Naive thymus-derived CD4-positive, alpha-beta T cell (primary cell): ENCODE measurements at regions of chr1 and their contacts with region 1.

Region 1: GRCh38 chr1:226687426-226687825 is 51.7 kb downstream of the ITPKB start:
- DNase-seq: peak in 7 of 9 donors; percentile 22 to 69 (median 55)
- ATAC-seq: peak; percentile 55
- H3K4me3 ChIP-seq: no peak overlapping the region
- H3K4me3 Mint-ChIP-seq: peak overlapping the region; percentile 4 to 89 (median 66)
- H3K27ac ChIP-seq: peak overlapping the region; percentile 86
- H3K27ac Mint-ChIP-seq: peak overlapping the region; percentile 20 to 100 (median 99)
- H3K4me1 ChIP-seq: peaks cover 80 to 100% of the 10 kb centered on the region in 2 donors
- H3K4me1 Mint-ChIP-seq: peaks cover 86 to 100% (median 100%) of the 10 kb centered on the region in 7 donors
- H3K27me3 ChIP-seq: no peaks in the 10 kb centered on the region
- H3K27me3 Mint-ChIP-seq: no peaks in the 10 kb centered on the region

Region 2: GRCh38 chr1:226634166-226634588 is 53.2 kb before region 1 on chr1:
- CTCF ChIA-PET with region 1: interaction called, 33 read pairs
- POLR2A ChIA-PET with region 1: interaction called, 7 read pairs
- intact Hi-C with region 1: loop called (anchors 1 kb)
- DNase-seq: peak; percentile 69 to 86 (median 79)
- ATAC-seq: peak; percentile 89
- H3K4me3 ChIP-seq: no peak overlapping the region
- H3K4me3 Mint-ChIP-seq: peak overlapping the region; percentile 10 to 90 (median 64)
- H3K27ac ChIP-seq: peak overlapping the region; percentile 54
- H3K27ac Mint-ChIP-seq: peak overlapping the region; percentile 76 to 98 (median 90)
- H3K4me1 ChIP-seq: peaks cover 26 to 48% of the 10 kb centered on the region in 2 donors
- H3K4me1 Mint-ChIP-seq: peaks cover 23 to 75% (median 61%) of the 10 kb centered on the region in 7 donors
- H3K27me3 ChIP-seq: no peaks in the 10 kb centered on the region
- H3K27me3 Mint-ChIP-seq: no peaks in the 10 kb centered on the region

Region 3: DNA sequence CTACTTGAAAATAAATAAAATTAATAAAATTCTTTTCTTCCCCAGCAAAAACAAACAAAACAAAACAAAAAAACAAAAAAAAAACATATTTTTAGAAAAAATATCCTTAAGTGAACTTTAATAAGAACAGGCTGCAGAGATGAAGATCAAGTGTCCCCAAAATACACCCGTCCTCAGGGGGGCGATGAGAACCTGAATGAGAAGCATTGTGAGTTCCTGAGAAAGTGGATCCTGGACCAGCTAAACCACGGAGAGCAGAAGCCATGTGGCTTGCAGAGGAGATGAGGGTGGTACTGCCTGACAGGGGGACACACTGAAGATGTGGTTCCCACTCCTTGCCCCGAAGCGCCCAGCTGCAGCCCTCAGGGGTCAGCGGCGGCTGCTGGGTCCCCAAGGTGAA is 37.6 kb before region 1 on chr1:
- CTCF ChIA-PET with region 1: interaction called, 7 read pairs
- POLR2A ChIA-PET with region 1: interaction called, 276 read pairs
- intact Hi-C with region 1: loop called in 1 of 2 experiments (anchors 1 kb)
- DNase-seq: peak in 6 of 9 donors; percentile 48 to 58 (median 54)
- ATAC-seq: no peak
- H3K4me3 ChIP-seq: no peak overlapping the region
- H3K4me3 Mint-ChIP-seq: peak overlapping the region in 5 of 10 donors; percentile 15 to 50 (median 17)
- H3K27ac ChIP-seq: no peak overlapping the region
- H3K27ac Mint-ChIP-seq: no peak overlapping the region
- H3K4me1 ChIP-seq: peaks cover 23 to 51% of the 10 kb centered on the region in 2 donors
- H3K4me1 Mint-ChIP-seq: peaks cover 0 to 83% (median 63%) of the 10 kb centered on the region in 7 donors
- H3K27me3 ChIP-seq: no peaks in the 10 kb centered on the region
- H3K27me3 Mint-ChIP-seq: no peaks in the 10 kb centered on the region

Region 4: GRCh38 chr1:226702957-226703831 is 15.8 kb after region 1 on chr1:
- CTCF ChIA-PET with region 1: interaction called, 6 read pairs
- POLR2A ChIA-PET with region 1: interaction called, 19 read pairs
- intact Hi-C with region 1: loop called (anchors 1 kb)
- DNase-seq: peak; percentile 79 to 93 (median 86)
- ATAC-seq: peak; percentile 92
- H3K4me3 ChIP-seq: peak overlapping the region; percentile 69
- H3K4me3 Mint-ChIP-seq: peak overlapping the region; percentile 81 to 92 (median 86)
- H3K27ac ChIP-seq: peak overlapping the region; percentile 93
- H3K27ac Mint-ChIP-seq: peak overlapping the region; percentile 89 to 99 (median 95)
- H3K4me1 ChIP-seq: peaks cover 42 to 85% of the 10 kb centered on the region in 2 donors
- H3K4me1 Mint-ChIP-seq: peaks cover 59 to 95% (median 81%) of the 10 kb centered on the region in 7 donors
- H3K27me3 ChIP-seq: no peaks in the 10 kb centered on the region
- H3K27me3 Mint-ChIP-seq: no peaks in the 10 kb centered on the region